Right lobe of liver (tissue), 6 donors: ENCODE measurements at regions of chr12 and their contacts with region 1.

Region 1: DNA sequence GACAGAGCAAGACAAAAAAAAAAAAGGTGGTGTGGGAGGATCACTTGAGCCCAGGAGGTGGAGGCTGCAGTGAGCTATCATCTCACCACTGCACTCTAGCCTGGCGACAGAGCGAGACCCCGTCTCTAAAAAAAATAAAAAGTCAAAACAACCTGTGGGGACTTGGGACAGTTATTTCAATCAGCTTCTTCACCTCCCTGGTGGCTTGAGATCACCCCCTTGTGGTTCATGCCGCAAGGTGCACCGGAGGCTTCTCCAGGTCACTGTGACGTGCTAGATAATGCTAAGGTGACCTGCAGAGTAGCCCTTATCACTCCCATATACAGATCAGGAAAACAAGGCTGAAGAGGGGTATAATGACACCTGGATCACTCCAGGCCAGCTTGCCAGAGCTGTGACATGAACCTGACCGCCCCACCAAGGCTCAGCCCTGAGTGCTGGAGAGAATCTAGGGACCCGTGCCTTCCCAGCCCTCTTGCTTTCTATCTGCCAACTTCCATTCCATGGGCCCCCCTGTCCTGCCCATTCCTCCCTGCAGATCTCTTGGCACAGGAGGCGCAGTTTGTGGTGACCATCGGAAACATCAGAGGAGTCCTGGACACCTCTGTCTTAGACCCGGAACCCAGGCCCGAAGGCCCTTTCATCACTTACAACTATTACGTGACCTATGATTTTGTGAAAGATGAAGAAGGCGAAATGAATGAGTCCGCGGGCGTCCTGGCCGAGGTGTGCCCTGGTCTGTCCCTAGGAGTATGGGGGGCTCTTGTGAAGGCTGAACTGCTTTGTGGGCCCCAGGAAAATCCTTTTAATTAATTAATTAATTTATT is 8.1 kb downstream of the LRRC43 start:
- DNase-seq: peak; percentile 64 to 81 (median 80)
- ATAC-seq: peak; percentile 95 to 99 (median 96)
- H3K4me3 ChIP-seq: no peak overlapping the region
- H3K27ac ChIP-seq: no peak overlapping the region
- H3K4me1 ChIP-seq: peaks cover 0 to 2% (median 0%) of the 10 kb centered on the region in 4 donors
- H3K27me3 ChIP-seq: no peaks in the 10 kb centered on the region
- CTCF ChIP-seq: peak; percentile 76 to 86 (median 82)
- POLR2A ChIP-seq: no peak

Region 2: GRCh38 chr12:122148657-122149056 is 42.4 kb before region 1 on chr12:
- intact Hi-C with region 1: loop called in 1 of 2 experiments (anchors 10 kb)
- DNase-seq: no peak
- ATAC-seq: peak in 3 of 4 donors; percentile 9 to 23 (median 16)
- H3K4me3 ChIP-seq: no peak overlapping the region
- H3K27ac ChIP-seq: no peak overlapping the region
- H3K4me1 ChIP-seq: no peaks in the 10 kb centered on the region
- H3K27me3 ChIP-seq: no peaks in the 10 kb centered on the region
- CTCF ChIP-seq: no peak
- POLR2A ChIP-seq: no peak

Region 3: GRCh38 chr12:122265931-122266771 is 75.1 kb after region 1 on chr12 and contains the start of gene VPS33A:
- intact Hi-C with region 1: no loop called
- DNase-seq: peak; percentile 96 to 97 (median 96)
- ATAC-seq: peak; percentile 95
- H3K4me3 ChIP-seq: peak within 1 kb of the TSS; percentile 87 to 98 (median 97)
- H3K27ac ChIP-seq: peak within 1 kb of the TSS; percentile 61 to 87 (median 84)
- H3K4me1 ChIP-seq: peaks cover 0 to 11% (median 5%) of the 10 kb centered on the region in 4 donors
- H3K27me3 ChIP-seq: no peaks in the 10 kb centered on the region
- CTCF ChIP-seq: no peak
- POLR2A ChIP-seq: peak; percentile 51
- total RNA-seq, gene VPS33A: 8.5 to 14.7 (median 11.6) TPM

Region 4: DNA sequence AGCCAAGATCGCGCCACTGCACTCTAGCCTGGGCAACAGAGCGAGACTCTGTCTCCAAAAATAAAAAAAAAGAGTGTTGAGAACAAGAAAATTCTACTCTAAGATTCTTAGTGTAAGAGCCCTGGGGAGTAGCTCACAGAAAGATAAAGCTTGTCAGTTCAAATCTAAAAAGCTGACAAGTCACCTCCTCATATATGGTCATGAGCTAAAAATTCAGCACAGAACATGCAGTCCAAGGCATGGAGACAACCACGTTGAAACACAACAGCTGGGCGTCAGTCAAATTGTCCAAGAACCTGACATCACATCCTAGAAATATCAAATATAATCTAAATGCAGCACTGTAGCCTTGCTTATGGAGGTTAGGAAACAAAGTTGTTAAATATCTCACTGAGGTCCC is 183.7 kb after region 1 on chr12:
- intact Hi-C with region 1: no loop called
- DNase-seq: no peak
- ATAC-seq: no peak
- H3K4me3 ChIP-seq: no peak overlapping the region
- H3K27ac ChIP-seq: no peak overlapping the region
- H3K4me1 ChIP-seq: no peaks in the 10 kb centered on the region
- H3K27me3 ChIP-seq: no peaks in the 10 kb centered on the region
- CTCF ChIP-seq: no peak
- POLR2A ChIP-seq: no peak